ENCODE measurements at regions of chr3 and their contacts with region 1.

Region 1: GRCh38 chr3:106299300-106300098 is 430.7 kb upstream of the CBLB start:
- DNase-seq: no peak
- H3K4me3 ChIP-seq: no peak overlapping the region
- H3K27ac ChIP-seq: no peak overlapping the region
- H3K4me1 ChIP-seq: peaks cover 0 to 3% of the 10 kb centered on the region in 2 donors
- H3K27me3 ChIP-seq: no peaks in the 10 kb centered on the region
- CTCF ChIP-seq: no peak

Region 2: DNA sequence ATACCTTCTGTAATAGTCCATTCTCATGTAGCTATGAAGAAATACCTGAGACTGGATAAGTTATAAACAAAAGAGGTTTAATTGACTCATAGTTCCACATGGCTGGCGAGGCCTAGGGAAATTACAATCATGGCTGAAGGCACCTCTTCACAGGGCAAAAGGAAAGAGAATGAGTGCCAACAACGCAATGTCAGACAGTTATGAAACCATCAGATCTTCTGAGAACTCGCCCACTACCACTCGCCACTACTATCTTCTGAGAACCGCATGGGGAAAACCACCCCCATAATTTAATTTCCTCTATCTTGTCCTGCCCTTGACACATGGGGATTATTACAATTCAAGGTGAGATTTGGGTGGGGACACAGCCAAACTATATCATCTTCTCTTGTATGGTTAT is 23.9 kb before region 1 on chr3:
- intact Hi-C with region 1: loop called (anchors 1 kb)
- DNase-seq: no peak
- H3K4me3 ChIP-seq: no peak overlapping the region
- H3K27ac ChIP-seq: no peak overlapping the region
- H3K4me1 ChIP-seq: no peaks in the 10 kb centered on the region
- H3K27me3 ChIP-seq: no peaks in the 10 kb centered on the region
- CTCF ChIP-seq: no peak

Region 3: GRCh38 chr3:106367496-106367895 is 68.0 kb after region 1 on chr3:
- intact Hi-C with region 1: no loop called
- DNase-seq: no peak
- H3K4me3 ChIP-seq: no peak overlapping the region
- H3K27ac ChIP-seq: no peak overlapping the region
- H3K4me1 ChIP-seq: no peaks in the 10 kb centered on the region
- H3K27me3 ChIP-seq: no peaks in the 10 kb centered on the region
- CTCF ChIP-seq: no peak

Measured in ascending aorta (tissue), 2 donors.